Dendritic cell treated with granulocyte-macrophage colony-stimulating factor and Interleukin-4, amounts not matched to agents 40 ng/mL and 50 ng/mL, for 4 days (primary cell): ENCODE measurements at regions of chr17 and their contacts with region 1.

Region 1: DNA sequence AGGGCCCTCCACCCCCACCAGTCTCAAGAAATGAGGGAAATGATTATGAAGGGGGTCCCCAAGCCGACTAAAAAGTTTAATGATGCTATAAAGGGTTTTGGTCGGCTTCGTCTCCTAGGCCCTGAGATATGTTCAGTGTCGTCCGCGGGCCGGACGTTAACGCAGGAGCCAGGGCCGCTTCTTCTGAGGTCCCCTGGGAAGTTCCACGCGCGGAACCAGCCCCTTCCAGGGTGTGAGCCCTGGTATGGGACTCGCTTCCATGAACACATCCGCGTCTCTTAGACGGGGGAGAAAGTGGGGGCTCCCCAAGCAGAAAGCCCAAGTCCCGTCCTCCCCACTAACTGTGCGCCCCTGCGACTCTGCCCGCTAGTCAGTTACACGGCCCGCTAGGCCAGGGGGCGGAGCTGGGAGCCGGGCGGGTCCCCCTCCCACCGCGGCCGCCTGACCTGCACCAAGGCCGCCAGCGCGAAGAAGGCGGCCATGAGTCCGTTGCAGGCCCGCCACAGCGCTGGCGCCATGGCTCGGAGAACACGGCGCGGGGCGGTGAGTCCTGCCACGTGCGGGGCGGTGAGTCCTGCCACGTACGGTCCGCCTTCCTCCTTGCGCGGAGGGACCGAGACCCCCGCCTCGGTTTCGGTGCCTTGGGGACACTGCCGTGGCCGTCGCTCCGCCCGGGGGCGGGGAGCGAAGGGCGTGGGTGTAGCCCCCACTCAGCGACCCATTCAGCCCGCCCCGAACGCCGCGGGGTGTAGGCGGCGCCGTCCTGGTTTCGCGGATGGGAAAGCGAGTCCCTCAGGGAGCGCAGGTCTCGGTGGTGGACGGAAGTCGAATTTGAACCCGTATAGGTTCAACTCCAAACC is at the start of gene TMEM220:
- H3K4me3 Mint-ChIP-seq: peak within 1 kb of the TSS; percentile 96
- H3K27ac Mint-ChIP-seq: peak within 1 kb of the TSS; percentile 85
- H3K4me1 Mint-ChIP-seq: peaks cover 16% of the 10 kb centered on the region
- H3K27me3 Mint-ChIP-seq: peaks cover 8% of the 10 kb centered on the region

Region 2: DNA sequence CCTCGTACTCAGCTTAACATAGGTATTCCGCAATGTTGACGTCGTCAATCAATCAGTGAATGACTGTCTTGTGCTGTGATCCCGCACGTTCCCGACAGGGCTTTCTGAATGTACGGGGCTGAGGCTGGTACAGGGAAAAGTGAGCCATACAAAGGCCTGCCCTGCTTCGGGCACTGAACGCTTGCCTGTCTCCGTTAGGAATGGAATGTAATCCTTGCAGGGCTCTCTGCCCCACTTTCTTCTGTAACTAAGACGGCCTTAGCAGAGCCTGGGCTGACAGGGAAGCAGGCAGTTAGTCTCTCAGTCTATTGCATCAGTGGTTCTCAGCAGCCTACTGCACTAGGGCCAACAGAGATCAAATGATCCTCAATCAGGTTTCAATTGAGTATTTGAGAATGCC is 56.3 kb before region 1 on chr17:
- intact Hi-C with region 1: no loop called
- H3K4me3 Mint-ChIP-seq: no peak overlapping the region
- H3K27ac Mint-ChIP-seq: no peak overlapping the region
- H3K4me1 Mint-ChIP-seq: no peaks in the 10 kb centered on the region
- H3K27me3 Mint-ChIP-seq: no peaks in the 10 kb centered on the region

Region 3: GRCh38 chr17:10697092-10698081 is 32.2 kb before region 1 on chr17 and contains the starts of genes ADPRM and SCO1:
- intact Hi-C with region 1: loop called (anchors 2 kb)
- H3K4me3 Mint-ChIP-seq: peak within 1 kb of the TSS; percentile 90
- H3K27ac Mint-ChIP-seq: peak within 1 kb of the TSS; percentile 87
- H3K4me1 Mint-ChIP-seq: peaks cover 22% of the 10 kb centered on the region
- H3K27me3 Mint-ChIP-seq: no peaks in the 10 kb centered on the region